HepG2 (cell line): ENCODE measurements at regions of chr5 and their contacts with region 1.

Region 1: GRCh38 chr5:59380350-59380951 is 513.1 kb downstream of the PDE4D start:
- DNase-seq: peak; percentile 50
- ATAC-seq: peak; percentile 62; the same call in 2 of the 3 replicates
- H3K4me3 ChIP-seq: no peak overlapping the region
- H3K27ac ChIP-seq: no peak overlapping the region
- H3K4me1 ChIP-seq: no peaks in the 10 kb centered on the region
- H3K27me3 ChIP-seq: no peaks in the 10 kb centered on the region
- CTCF ChIP-seq: peak; percentile 68
- EP300 ChIP-seq: no peak
- POLR2A ChIP-seq: no peak
- RAD21 ChIP-seq: no peak

Region 2: GRCh38 chr5:59188419-59189225 is 191.8 kb before region 1 on chr5:
- CTCF ChIA-PET with region 1: interaction called, 29 read pairs
- POLR2A ChIA-PET with region 1: no interaction called
- in situ Hi-C with region 1: no loop called
- intact Hi-C with region 1: loop called (anchors 1 kb)
- DNase-seq: peak; percentile 58
- ATAC-seq: peak; percentile 85
- H3K4me3 ChIP-seq: peak overlapping the region in 2 of 3 experiments; percentile 53 to 55; a peak in 4 of 6 replicates
- H3K27ac ChIP-seq: no peak overlapping the region
- H3K4me1 ChIP-seq: no peaks in the 10 kb centered on the region; the same call in 1 of the 2 replicates
- H3K27me3 ChIP-seq: no peaks in the 10 kb centered on the region
- CTCF ChIP-seq: peak; percentile 86
- EP300 ChIP-seq: no peak
- POLR2A ChIP-seq: no peak
- RAD21 ChIP-seq: peak; percentile 76

Region 3: GRCh38 chr5:59436364-59437148 is 56.1 kb after region 1 on chr5:
- CTCF ChIA-PET with region 1: no interaction called
- POLR2A ChIA-PET with region 1: no interaction called
- in situ Hi-C with region 1: no loop called
- intact Hi-C with region 1: no loop called
- DNase-seq: no peak
- ATAC-seq: no peak
- H3K4me3 ChIP-seq: no peak overlapping the region
- H3K27ac ChIP-seq: no peak overlapping the region
- H3K4me1 ChIP-seq: no peaks in the 10 kb centered on the region
- H3K27me3 ChIP-seq: no peaks in the 10 kb centered on the region
- CTCF ChIP-seq: no peak
- EP300 ChIP-seq: no peak
- POLR2A ChIP-seq: no peak
- RAD21 ChIP-seq: no peak

Region 4: GRCh38 chr5:60257596-60258271 is 877.3 kb after region 1 on chr5:
- CTCF ChIA-PET with region 1: no interaction called
- POLR2A ChIA-PET with region 1: no interaction called
- in situ Hi-C with region 1: loop called (anchors 25 kb)
- intact Hi-C with region 1: no loop called
- DNase-seq: peak; percentile 74
- ATAC-seq: peak; percentile 98
- H3K4me3 ChIP-seq: no peak overlapping the region
- H3K27ac ChIP-seq: no peak overlapping the region
- H3K4me1 ChIP-seq: peaks cover 13% of the 10 kb centered on the region
- H3K27me3 ChIP-seq: no peaks in the 10 kb centered on the region
- CTCF ChIP-seq: no peak
- EP300 ChIP-seq: no peak
- POLR2A ChIP-seq: no peak
- RAD21 ChIP-seq: no peak

Region 5: DNA sequence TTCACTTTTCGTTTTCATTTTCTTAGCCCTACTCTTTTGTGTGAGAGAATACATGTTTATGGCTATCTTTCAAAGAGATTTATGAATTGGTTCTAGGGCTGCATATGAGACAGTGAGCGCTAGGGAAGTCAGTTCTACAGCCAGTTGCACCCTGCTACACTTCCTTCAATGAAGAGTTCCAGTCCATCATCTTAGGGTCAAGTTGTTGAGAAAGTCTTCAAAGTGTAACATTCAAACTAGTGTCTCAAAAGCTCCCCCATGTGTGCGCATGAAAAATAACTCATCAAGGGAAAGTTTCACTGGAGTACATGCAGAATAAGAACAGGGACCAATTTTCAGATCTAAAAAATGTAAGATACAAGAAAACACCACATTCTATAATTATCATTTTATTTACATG is 1002.3 kb after region 1 on chr5:
- CTCF ChIA-PET with region 1: no interaction called
- POLR2A ChIA-PET with region 1: no interaction called
- in situ Hi-C with region 1: loop called (anchors 25 kb)
- intact Hi-C with region 1: loop called (anchors 10 kb)
- DNase-seq: no peak
- ATAC-seq: no peak
- H3K4me3 ChIP-seq: no peak overlapping the region
- H3K27ac ChIP-seq: no peak overlapping the region
- H3K4me1 ChIP-seq: peaks cover 7% of the 10 kb centered on the region; the same call in 1 of the 2 replicates
- H3K27me3 ChIP-seq: no peaks in the 10 kb centered on the region
- CTCF ChIP-seq: peak; percentile 62
- EP300 ChIP-seq: no peak
- POLR2A ChIP-seq: no peak
- RAD21 ChIP-seq: no peak

Region 6: DNA sequence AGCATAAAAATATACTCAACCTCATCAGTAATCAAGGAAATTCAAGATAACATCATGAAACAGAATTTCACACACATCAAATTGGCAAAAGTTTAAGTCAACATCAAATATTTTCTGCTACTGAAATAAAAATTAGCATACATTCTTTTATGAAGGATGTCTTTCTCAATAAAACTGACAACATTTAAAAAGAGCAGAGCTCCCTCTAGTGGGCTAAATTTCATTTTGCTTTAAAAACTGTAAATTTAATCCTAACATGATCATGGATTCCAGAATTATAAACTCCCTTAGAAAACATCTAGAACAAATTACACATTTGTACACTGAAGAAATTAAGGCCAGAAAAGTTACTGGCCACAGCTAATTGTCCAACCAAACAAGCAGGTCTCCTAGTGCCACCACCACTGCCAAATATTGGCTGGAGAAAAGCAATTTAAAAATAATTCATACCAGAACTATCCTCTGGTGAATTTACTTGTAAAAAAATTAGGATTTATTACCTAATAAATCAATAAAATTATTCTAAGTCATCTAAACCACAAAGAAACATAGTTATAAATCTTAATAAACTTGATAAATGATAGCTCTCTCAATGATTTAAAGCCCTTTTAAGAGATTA is 1288.3 kb after region 1 on chr5:
- CTCF ChIA-PET with region 1: no interaction called
- POLR2A ChIA-PET with region 1: no interaction called
- in situ Hi-C with region 1: loop called (anchors 25 kb)
- intact Hi-C with region 1: no loop called
- DNase-seq: peak; percentile 33
- ATAC-seq: no peak
- H3K4me3 ChIP-seq: no peak overlapping the region; a peak in 2 of 6 replicates
- H3K27ac ChIP-seq: peak overlapping the region; percentile 50
- H3K4me1 ChIP-seq: peaks cover 56% of the 10 kb centered on the region
- H3K27me3 ChIP-seq: no peaks in the 10 kb centered on the region
- CTCF ChIP-seq: peak; percentile 43; the same call in 1 of the 2 replicates
- EP300 ChIP-seq: no peak
- POLR2A ChIP-seq: no peak
- RAD21 ChIP-seq: no peak